ENCODE measurements at regions of chr1 and their contacts with region 1.

Region 1: DNA sequence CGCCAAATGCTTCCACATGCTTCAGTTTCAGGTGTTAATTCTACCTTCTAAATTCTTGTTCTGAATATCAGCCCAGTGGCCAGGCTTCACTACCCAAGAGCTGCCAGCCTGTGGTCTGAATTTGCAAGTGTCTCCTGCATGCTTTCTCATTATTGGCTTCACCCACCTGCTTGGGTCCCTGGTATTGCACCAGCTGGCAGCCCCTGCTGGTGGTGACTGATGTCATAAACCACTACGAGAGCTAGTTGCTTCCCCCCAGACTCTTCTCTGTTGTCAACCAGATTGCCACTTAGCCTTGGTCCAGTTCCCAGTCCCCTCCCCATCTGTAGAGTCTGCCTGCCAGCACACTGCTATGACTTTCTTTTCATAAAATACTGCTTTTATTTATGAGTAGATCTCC is 197.7 kb upstream of the DUSP10 start:
- DNase-seq: no peak

Region 2: DNA sequence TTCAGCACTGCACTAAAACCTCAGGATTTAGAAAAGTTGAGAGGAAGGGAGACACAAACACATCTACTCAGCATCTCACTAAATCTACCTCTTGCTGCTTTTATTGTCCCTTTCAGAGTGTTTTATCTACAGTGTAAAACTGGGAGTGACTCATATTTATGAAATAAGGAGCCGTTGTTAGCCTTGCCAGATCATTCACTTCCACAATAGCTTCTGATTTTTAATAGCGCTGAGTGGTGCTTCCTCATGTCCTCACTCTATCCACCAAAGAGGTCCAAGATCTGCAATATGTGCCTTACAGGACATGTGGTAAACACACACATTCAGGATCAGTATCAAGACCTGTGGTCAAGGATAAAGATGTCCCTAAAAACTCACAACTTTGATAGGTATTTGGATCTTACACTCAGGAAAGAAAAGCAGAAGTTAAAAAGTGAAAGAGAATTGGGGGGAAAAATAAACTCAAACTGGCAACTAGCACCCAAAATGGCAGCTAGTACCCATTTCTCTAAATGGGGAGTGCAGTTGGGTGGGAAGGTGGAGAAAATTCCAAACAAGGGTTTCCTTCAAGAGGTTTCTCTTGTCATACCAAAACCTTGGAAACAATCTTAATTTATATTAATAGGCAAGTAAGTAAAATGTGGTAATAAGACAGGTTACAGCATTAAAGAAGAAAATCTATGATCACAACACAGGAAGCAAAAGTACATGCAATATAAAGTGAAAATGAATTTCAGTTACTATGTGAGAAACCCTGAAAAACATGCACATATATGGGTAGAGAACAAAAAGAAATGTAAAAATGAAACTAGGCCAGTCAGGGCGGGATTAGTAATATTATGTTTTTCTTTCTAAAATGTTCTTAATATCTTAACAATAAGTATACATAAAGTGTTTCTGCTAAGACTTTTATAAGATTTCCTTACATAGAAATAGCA is 213.6 kb before region 1 on chr1:
- intact Hi-C with region 1: no loop called
- DNase-seq: no peak

Region 3: GRCh38 chr1:221878134-221878533 is 61.5 kb before region 1 on chr1:
- intact Hi-C with region 1: loop called (anchors 10 kb)
- DNase-seq: no peak